Endothelial cell of umbilical vein (primary cell): ENCODE measurements at regions of chr10 and their contacts with region 1.

Region 1: DNA sequence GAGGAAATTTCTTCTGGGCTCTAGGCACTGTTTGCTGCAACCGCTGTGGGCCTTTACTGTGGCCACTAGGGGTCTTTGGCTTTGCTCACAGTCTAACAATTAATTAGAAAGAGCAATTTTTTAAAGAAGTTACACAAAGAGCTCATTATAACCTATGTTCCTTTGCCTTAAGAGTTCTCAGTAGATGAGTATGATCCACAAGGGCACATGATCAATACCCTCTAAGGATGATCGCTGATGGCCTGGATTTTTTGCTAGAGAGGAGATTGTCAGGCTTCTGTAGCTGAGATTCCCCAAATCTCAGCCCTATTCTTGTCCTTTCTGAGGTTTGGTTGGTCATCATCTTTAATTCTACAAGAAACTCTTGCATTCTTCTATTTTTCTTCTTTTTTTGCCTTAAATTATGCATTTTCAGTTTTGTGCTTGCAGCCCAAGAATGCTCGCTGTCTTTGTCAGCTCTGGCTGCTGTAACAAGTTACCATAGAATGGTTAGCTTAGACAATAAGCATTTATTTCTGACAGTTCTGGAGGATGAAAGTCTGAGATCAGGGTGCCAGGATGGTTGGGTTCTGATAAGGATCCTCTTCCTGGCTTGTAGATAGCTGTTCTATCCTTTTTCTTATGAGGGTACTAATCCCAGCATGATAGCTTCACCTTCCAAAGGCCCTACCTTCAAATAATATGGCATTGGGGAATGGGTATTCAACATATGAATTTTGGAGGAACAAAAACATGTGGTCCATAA is 81.0 kb upstream of the RHOBTB1 start:
- DNase-seq: no peak
- H3K4me3 ChIP-seq: no peak overlapping the region
- H3K27ac ChIP-seq: no peak overlapping the region
- H3K4me1 ChIP-seq: no peaks in the 10 kb centered on the region
- H3K27me3 ChIP-seq: peaks cover 0 to 4% of the 10 kb centered on the region in 2 experiments
- CTCF ChIP-seq: peak; percentile 82
- POLR2A ChIP-seq: no peak

Region 2: DNA sequence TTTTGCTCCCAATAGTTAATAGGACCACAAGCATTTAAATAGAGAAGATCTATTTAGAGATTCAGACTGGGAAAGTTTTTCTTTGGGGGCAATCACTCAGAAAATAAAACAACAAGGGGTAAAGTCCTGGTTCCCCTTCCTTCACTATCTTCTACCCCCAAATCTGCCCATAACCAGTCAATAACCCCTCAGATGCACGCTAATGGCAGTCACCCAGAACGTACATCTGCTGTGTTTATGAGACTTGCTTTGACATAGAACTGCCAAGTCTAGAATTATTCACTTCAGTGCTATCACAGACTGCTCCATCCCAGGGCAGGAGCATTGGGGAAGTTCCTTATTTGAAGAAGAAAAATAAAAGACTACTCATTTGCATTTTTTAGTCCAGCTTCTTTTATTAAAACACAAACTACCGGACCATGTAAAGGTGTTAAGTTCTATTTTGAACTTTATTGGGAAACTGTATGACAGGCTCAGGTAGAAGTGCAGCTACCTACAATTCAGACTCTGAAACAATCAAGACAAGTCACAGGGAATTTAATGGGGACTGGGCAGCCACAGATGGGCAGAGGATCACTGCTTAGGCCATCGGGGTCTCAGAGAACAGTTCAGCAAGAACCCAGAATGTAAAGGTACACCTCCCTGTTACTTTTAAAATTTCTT is 673.7 kb before region 1 on chr10:
- CTCF ChIA-PET with region 1: no interaction called
- POLR2A ChIA-PET with region 1: no interaction called
- dilution Hi-C with region 1: no loop called
- intact Hi-C with region 1: no loop called
- DNase-seq: no peak
- H3K4me3 ChIP-seq: no peak overlapping the region
- H3K27ac ChIP-seq: no peak overlapping the region
- H3K4me1 ChIP-seq: no peaks in the 10 kb centered on the region
- H3K27me3 ChIP-seq: no peaks in the 10 kb centered on the region
- CTCF ChIP-seq: no peak
- POLR2A ChIP-seq: no peak

Region 3: GRCh38 chr10:60978287-60979115 is 46.5 kb before region 1 on chr10:
- CTCF ChIA-PET with region 1: interaction called, 10 read pairs
- POLR2A ChIA-PET with region 1: no interaction called
- dilution Hi-C with region 1: no loop called
- intact Hi-C with region 1: no loop called
- DNase-seq: peak; percentile 94
- H3K4me3 ChIP-seq: no peak overlapping the region
- H3K27ac ChIP-seq: peak overlapping the region; percentile 89
- H3K4me1 ChIP-seq: peaks cover 41% of the 10 kb centered on the region
- H3K27me3 ChIP-seq: no peaks in the 10 kb centered on the region
- CTCF ChIP-seq: no peak
- POLR2A ChIP-seq: no peak

Region 4: DNA sequence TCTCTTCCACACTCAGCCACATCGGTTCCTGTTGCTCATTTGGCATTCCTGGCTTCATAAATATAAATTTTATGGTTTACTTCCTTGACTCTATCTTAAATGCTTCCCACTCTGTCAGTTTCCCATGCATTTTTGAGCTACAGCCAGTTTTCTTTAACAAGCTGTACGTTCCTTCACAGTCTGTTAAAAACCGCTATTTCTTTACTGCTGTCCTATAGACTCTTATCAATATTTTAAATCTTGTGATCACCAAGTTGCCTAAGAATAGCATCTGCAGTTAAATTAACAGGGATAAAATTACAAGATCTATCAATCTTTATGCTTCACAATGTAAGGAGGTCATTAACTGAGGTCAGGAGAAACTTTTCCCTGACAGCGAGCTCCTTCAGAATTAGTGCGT is 22.1 kb after region 1 on chr10:
- CTCF ChIA-PET with region 1: interaction called, 21 read pairs
- POLR2A ChIA-PET with region 1: no interaction called
- dilution Hi-C with region 1: no loop called
- intact Hi-C with region 1: no loop called
- DNase-seq: peak; percentile 86
- H3K4me3 ChIP-seq: no peak overlapping the region
- H3K27ac ChIP-seq: no peak overlapping the region
- H3K4me1 ChIP-seq: no peaks in the 10 kb centered on the region
- H3K27me3 ChIP-seq: peaks cover 0 to 12% of the 10 kb centered on the region in 2 experiments
- CTCF ChIP-seq: no peak
- POLR2A ChIP-seq: no peak

Region 5: DNA sequence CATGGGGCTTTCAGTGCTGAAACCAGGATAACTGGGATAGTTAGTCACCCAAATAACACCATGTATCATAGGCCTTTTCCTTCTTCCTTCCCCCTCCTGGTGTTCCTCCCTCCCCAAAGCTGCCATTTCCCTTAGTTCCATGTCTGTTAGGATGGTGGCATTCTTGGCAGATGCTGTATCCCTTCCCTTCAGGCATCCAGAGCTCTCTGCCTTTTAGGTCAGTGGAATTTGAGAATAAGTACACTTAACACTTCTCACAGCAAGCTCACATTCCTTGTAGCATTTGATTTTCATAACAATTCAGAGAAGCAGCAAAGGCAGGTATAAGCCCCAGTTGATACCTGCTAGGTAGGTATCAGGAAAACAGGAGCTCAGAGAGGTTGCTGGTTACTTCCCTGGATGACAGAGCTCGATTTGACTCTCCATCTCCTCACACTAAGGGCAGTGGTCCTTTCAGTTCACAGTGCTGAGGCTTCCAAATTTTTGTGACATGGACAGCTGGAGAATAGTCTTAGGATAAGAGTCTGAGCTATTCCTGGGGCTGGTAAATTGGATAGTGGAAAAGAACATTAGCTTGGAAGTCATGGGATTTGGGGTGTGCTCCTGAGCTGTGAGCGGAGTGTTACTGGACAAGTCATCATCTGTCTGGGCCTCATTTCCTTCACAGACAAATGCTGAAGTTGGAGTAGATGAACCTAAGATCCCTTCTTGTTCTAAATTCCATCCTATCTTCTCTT is 27.6 kb after region 1 on chr10:
- CTCF ChIA-PET with region 1: interaction called, 21 read pairs
- POLR2A ChIA-PET with region 1: no interaction called
- dilution Hi-C with region 1: no loop called
- intact Hi-C with region 1: no loop called
- DNase-seq: no peak
- H3K4me3 ChIP-seq: no peak overlapping the region
- H3K27ac ChIP-seq: no peak overlapping the region
- H3K4me1 ChIP-seq: no peaks in the 10 kb centered on the region
- H3K27me3 ChIP-seq: peaks cover 2 to 4% of the 10 kb centered on the region in 2 experiments
- CTCF ChIP-seq: no peak
- POLR2A ChIP-seq: no peak

Region 6: DNA sequence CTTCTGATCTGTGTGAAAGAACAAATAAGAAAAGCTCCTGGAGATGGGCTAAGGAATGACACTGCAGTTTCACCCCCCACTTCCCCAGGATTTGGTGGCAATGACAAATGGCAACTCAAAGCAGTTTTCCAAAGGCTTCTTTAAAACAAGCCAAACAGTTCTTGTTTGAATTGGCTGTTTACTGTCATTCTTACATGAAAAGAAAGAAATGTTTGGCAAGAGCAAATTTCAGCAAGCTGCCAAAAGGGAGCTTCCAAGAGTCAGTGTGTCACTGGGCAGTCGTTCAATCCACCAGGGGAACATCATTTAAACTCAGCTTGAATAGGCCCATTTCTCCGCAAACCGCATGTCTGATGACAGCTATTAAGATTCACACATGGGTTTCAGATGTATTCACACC is 38.0 kb after region 1 on chr10:
- CTCF ChIA-PET with region 1: interaction called, 11 read pairs
- POLR2A ChIA-PET with region 1: no interaction called
- dilution Hi-C with region 1: no loop called
- intact Hi-C with region 1: no loop called
- DNase-seq: peak; percentile 16
- H3K4me3 ChIP-seq: no peak overlapping the region
- H3K27ac ChIP-seq: no peak overlapping the region
- H3K4me1 ChIP-seq: peaks cover 13% of the 10 kb centered on the region
- H3K27me3 ChIP-seq: no peaks in the 10 kb centered on the region
- CTCF ChIP-seq: no peak
- POLR2A ChIP-seq: no peak